Activated B cell treated with CpG ODN at 0.5 μM for 24 hours (primary cell): ENCODE measurements at regions of chr9 and their contacts with region 1.

Region 1: DNA sequence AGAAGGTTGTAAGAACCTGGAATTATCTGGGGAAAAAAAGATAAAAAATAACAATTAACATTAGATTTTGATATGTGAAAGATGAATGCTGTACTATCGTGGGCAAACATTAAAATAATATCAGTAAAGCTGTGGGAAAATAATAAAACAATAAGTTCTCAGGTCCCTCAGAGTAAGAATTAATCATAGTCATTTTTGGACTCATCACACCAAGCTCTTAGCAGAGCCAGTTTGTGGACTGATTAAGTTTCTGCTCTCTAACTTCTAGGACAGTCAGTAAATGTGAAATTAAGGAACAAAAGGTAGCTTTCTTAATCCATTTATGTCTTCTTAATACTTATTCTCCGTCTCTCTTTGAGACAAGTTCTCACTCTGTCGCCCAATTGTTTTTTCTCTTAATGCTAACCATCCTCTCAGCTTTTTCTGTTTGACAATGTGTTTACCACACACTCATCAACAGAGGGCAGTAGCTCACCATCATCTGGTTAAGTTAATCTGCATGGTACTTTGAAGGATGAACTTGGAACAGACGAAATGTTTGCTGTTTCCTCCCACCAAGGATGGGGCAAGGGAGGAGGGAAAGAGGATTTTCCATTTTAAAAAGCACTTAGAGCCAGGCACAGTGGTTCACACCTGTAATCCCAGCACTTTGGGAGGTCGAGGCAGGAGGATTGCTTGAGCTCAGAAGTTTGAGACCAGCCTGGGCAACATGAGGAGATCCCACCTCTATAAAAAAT is 5.3 kb upstream of the ACO1 start:
- DNase-seq: no peak
- ATAC-seq: peak; percentile 80
- H3K4me3 Mint-ChIP-seq: no peak overlapping the region
- H3K27ac Mint-ChIP-seq: no peak overlapping the region
- H3K4me1 Mint-ChIP-seq: peaks cover 15% of the 10 kb centered on the region
- H3K27me3 Mint-ChIP-seq: peaks cover 27% of the 10 kb centered on the region
- CTCF ChIP-seq: no peak

Region 2: GRCh38 chr9:32339424-32339823 is 39.7 kb before region 1 on chr9:
- CTCF ChIA-PET with region 1: no interaction called
- POLR2A ChIA-PET with region 1: no interaction called
- intact Hi-C with region 1: no loop called
- DNase-seq: no peak
- ATAC-seq: no peak
- H3K4me3 Mint-ChIP-seq: no peak overlapping the region
- H3K27ac Mint-ChIP-seq: no peak overlapping the region
- H3K4me1 Mint-ChIP-seq: no peaks in the 10 kb centered on the region
- H3K27me3 Mint-ChIP-seq: peaks cover 1% of the 10 kb centered on the region
- CTCF ChIP-seq: no peak

Region 3: GRCh38 chr9:32431940-32432555 is 52.9 kb after region 1 on chr9:
- CTCF ChIA-PET with region 1: interaction called, 83 read pairs
- POLR2A ChIA-PET with region 1: interaction called, 4 read pairs
- intact Hi-C with region 1: loop called (anchors 1 kb)
- DNase-seq: no peak
- ATAC-seq: peak; percentile 52
- H3K4me3 Mint-ChIP-seq: no peak overlapping the region
- H3K27ac Mint-ChIP-seq: no peak overlapping the region
- H3K4me1 Mint-ChIP-seq: no peaks in the 10 kb centered on the region
- H3K27me3 Mint-ChIP-seq: no peaks in the 10 kb centered on the region
- CTCF ChIP-seq: no peak

Region 4: GRCh38 chr9:32550562-32551433 is 171.6 kb after region 1 on chr9:
- CTCF ChIA-PET with region 1: interaction called, 18 read pairs
- POLR2A ChIA-PET with region 1: interaction called, 19 read pairs
- intact Hi-C with region 1: loop called (anchors 1 kb)
- DNase-seq: peak; percentile 91
- ATAC-seq: peak; percentile 80
- H3K4me3 Mint-ChIP-seq: peak overlapping the region; percentile 95
- H3K27ac Mint-ChIP-seq: peak overlapping the region; percentile 98
- H3K4me1 Mint-ChIP-seq: peaks cover 34% of the 10 kb centered on the region
- H3K27me3 Mint-ChIP-seq: no peaks in the 10 kb centered on the region
- CTCF ChIP-seq: no peak

Region 5: DNA sequence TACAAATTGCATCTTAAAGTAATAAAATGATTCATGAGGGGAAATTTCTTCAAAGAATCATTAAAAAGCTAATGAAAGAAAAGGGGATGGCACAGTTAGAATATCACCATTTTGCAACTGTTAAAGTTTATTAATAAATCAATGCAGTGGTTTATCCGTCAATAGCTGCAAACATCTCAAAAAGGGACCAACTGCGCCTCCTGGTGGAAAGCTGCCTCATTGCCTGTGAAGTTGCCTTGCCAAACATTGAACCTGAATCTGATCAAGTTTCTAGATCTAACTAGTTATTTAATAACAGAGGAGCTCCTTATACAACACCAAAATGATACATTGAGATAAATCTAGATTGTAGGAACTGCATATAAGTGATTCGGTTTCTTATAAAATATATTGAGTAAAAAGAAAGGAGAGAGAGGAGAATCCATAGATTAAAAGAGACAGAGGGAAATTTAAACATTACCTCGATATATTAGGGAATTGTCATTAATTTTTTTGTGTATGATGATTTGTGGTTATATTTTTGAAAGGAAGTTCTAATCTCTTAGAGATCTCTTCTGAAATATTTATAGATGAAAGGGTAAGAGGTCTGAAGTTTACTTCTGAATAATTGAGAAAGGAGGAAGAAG is 200.7 kb after region 1 on chr9:
- CTCF ChIA-PET with region 1: interaction called, 440 read pairs
- POLR2A ChIA-PET with region 1: interaction called, 3 read pairs
- intact Hi-C with region 1: loop called (anchors 1 kb)
- DNase-seq: peak; percentile 59
- ATAC-seq: peak; percentile 64
- H3K4me3 Mint-ChIP-seq: no peak overlapping the region
- H3K27ac Mint-ChIP-seq: no peak overlapping the region
- H3K4me1 Mint-ChIP-seq: no peaks in the 10 kb centered on the region
- H3K27me3 Mint-ChIP-seq: peaks cover 20% of the 10 kb centered on the region
- CTCF ChIP-seq: peak; percentile 97

Region 6: GRCh38 chr9:32703635-32704034 is 324.5 kb after region 1 on chr9:
- CTCF ChIA-PET with region 1: no interaction called
- POLR2A ChIA-PET with region 1: no interaction called
- intact Hi-C with region 1: loop called (anchors 10 kb)
- DNase-seq: no peak
- ATAC-seq: no peak
- H3K4me3 Mint-ChIP-seq: no peak overlapping the region
- H3K27ac Mint-ChIP-seq: no peak overlapping the region
- H3K4me1 Mint-ChIP-seq: no peaks in the 10 kb centered on the region
- H3K27me3 Mint-ChIP-seq: no peaks in the 10 kb centered on the region
- CTCF ChIP-seq: no peak

Region 7: DNA sequence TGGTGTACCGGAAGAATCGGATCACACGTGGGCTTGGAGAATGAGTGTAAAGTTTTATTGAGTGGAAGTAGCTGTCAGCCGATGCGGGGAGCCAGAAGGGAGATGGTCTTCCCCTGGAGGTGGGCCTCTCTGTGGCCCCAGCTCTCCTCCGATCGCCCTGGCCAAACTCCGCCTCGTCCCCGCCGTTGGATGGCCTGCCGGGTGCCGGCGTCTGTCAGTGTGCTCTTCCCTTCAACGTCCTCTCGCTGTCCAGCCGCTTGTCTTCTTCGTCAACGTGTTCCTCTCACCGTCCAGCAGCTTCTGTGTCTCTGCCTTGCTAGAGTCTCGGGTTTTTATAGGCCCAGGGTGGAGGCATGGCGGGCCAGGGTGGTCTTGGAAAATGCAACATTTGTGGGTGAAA is 376.6 kb after region 1 on chr9:
- CTCF ChIA-PET with region 1: no interaction called
- POLR2A ChIA-PET with region 1: no interaction called
- intact Hi-C with region 1: no loop called
- DNase-seq: no peak
- ATAC-seq: no peak
- H3K4me3 Mint-ChIP-seq: no peak overlapping the region
- H3K27ac Mint-ChIP-seq: no peak overlapping the region
- H3K4me1 Mint-ChIP-seq: no peaks in the 10 kb centered on the region
- H3K27me3 Mint-ChIP-seq: peaks cover 6% of the 10 kb centered on the region
- CTCF ChIP-seq: no peak